ENCODE measurements at regions of chr18 and their contacts with region 1.

Region 1: DNA sequence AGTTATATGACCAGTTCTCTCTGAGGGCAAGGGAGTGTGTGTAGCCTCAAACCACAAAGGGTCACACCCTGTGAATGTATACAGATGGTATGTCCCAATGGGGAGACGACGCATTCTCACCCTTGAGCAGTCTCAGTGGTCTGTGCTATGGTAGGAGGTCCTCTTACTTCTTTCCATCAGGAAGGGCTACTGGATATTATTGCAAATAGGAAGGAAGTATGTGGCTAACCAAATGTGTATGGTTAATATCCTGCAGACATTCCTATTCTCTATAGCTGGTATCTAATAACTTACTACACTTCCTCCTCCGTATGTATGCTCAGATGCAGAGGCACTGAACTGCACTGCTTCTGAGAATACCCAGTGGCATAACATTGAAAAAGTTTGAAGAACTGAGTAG is 306.7 kb upstream of the CCDC68 start:
- DNase-seq: no peak
- ATAC-seq: peak; percentile 38
- H3K4me3 Mint-ChIP-seq: peak overlapping the region; percentile 44
- H3K27ac Mint-ChIP-seq: peak overlapping the region; percentile 93
- H3K4me1 Mint-ChIP-seq: peaks cover 73% of the 10 kb centered on the region
- H3K27me3 Mint-ChIP-seq: no peaks in the 10 kb centered on the region
- CTCF ChIP-seq: no peak

Region 2: GRCh38 chr18:53509886-53510285 is 1756.1 kb before region 1 on chr18:
- CTCF ChIA-PET with region 1: no interaction called
- POLR2A ChIA-PET with region 1: no interaction called
- intact Hi-C with region 1: no loop called
- DNase-seq: no peak
- ATAC-seq: no peak
- H3K4me3 Mint-ChIP-seq: no peak overlapping the region
- H3K27ac Mint-ChIP-seq: no peak overlapping the region
- H3K4me1 Mint-ChIP-seq: no peaks in the 10 kb centered on the region
- H3K27me3 Mint-ChIP-seq: no peaks in the 10 kb centered on the region
- CTCF ChIP-seq: no peak

Region 3: DNA sequence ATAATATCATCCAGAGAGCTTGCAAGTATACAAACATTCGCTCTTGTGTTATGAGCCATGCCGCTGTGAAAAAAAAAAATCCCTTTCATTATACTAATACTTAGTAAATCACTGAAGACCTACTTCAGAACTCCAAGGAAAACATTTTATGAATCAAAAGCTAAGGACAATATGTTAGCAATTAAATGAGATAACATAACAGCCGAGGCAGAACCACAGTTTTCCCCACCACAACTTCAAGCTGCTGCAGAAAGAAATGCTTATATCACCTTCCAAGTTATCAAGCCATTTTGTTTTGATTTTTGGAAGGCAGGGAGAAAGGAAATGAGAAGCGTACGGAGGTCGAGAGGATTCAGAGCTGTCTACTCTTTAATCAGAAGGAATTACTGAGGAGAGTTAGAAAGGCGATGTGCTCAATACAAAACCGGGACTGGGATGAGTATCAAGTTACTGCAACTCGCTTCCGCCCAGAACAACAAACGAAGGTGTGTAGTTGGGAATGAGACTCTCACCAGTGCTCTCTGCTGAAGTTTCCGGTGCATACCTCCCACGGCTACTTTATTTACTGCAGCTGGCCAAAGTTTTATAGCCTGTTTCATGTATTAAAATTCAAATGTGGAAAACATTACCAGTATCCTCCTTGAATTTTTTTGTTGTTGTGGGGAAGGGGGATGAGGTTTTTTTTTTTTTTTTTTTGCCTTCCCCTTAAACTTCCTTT is 14.6 kb before region 1 on chr18:
- CTCF ChIA-PET with region 1: interaction called, 3 read pairs
- POLR2A ChIA-PET with region 1: interaction called, 21 read pairs
- intact Hi-C with region 1: loop called (anchors 1 kb)
- DNase-seq: no peak
- ATAC-seq: no peak
- H3K4me3 Mint-ChIP-seq: peak overlapping the region; percentile 2
- H3K27ac Mint-ChIP-seq: peak overlapping the region; percentile 74
- H3K4me1 Mint-ChIP-seq: peaks cover 69% of the 10 kb centered on the region
- H3K27me3 Mint-ChIP-seq: no peaks in the 10 kb centered on the region
- CTCF ChIP-seq: no peak

Region 4: GRCh38 chr18:57084331-57085271 is 1818.6 kb after region 1 on chr18:
- CTCF ChIA-PET with region 1: no interaction called
- POLR2A ChIA-PET with region 1: interaction called, 10 read pairs
- intact Hi-C with region 1: no loop called
- DNase-seq: no peak
- ATAC-seq: peak; percentile 68
- H3K4me3 Mint-ChIP-seq: no peak overlapping the region
- H3K27ac Mint-ChIP-seq: no peak overlapping the region
- H3K4me1 Mint-ChIP-seq: peaks cover 25% of the 10 kb centered on the region
- H3K27me3 Mint-ChIP-seq: peaks cover 89% of the 10 kb centered on the region
- CTCF ChIP-seq: no peak